Dorsolateral prefrontal cortex (tissue), 120 donors: ENCODE measurements at regions of chr14 and their contacts with region 1.

Region 1: DNA sequence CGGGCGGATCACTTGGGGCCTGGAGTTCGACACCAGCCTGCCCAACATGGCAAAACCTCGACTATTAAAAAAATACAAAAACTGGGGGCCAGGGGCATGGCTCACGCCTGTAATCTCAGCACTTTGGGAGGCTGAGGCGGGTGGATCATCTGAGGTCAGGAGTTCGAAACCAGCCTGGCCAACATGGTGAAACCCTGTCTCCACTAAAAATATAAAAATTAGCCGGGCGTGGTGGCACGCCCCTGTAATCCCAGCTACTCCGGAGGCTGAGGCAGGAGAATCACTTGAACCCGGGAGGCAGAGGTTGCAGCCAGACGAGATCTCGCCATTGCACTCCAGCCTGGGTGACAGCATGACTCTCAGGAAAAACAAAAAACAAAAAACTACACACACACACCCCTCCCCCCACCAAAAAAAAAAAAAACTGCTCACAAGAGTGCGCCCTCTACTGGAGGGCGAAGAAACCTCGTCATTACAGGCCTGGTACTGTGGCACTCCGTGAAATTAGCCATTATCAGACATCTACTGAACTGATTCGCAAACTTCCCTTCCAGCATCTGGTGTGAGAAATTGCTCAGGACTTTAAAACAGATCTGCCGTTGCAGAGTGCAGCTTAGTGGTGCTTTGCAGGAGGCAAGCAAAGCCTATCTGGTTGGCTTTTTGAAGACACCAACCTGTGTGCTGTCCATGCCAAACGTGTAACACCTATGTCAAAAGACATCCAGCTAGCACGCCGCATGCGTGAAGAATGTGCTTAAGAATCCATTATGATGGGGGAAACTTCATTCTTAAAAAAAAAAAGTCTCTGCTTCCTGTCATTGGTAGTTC is 7.7 kb downstream of the PPP1R3E start:
- DNase-seq: peak in 3 of 10 donors; percentile 19 to 45 (median 35)
- H3K4me3 ChIP-seq: peak overlapping the region in 34 of 59 donors; percentile 3 to 45 (median 24)
- H3K27ac ChIP-seq: peak overlapping the region; percentile 7 to 100 (median 91)
- H3K27me3 ChIP-seq: no peaks in the 10 kb centered on the region
- CTCF ChIP-seq: peak; percentile 71 to 95 (median 86)

Region 2: DNA sequence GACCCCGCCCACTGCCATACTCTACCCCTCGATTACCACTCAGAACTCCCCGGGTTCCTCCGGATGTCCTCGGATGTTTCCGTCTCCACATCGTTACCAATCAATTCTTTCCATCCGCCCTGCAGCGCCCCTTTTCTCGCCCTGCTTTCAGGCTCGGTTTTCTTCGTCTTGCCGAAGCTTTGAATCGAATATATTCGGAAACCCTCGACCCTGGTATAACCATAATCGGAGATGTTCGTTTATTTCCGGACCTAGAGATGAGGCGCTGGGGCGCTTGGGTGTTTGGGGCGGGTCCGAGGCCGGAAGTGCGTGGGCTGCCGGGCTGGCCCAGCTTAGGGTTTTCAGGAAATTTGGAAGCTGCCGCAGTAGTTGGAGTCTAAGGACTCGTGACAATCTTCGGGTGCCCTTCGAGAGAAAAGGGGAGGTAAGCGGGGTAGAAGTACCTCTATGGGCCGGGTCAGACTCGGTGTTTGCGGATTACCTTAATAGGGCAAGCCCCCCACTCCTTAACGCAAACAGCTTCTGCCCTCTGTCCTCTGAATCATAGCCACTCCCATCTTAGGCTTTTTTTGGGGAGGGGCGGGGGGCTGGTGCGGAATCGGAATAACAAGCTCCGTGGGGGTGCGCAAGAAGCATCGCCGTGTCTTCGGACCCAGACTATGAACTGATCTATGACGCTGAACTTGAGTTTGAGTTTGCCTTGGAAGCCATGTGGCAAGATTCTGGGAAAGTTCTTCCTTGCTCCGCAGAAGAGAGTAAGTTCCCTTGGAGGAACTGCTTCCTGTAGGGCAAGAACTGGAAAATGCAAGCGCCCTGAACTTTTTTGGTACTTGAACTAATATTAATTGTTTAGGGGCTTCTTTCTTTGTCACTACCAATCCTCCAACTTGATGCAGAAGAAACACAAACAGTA is 199.5 kb before region 1 on chr14 and contains the start of gene C14orf119:
- intact Hi-C with region 1: no loop called
- DNase-seq: peak in 8 of 10 donors; percentile 99 to 100 (median 99)
- H3K4me3 ChIP-seq: peak within 1 kb of the TSS; percentile 66 to 99 (median 87)
- H3K27ac ChIP-seq: peak within 1 kb of the TSS; percentile 95 to 100 (median 99)
- H3K27me3 ChIP-seq: no peaks in the 10 kb centered on the region
- CTCF ChIP-seq: peak in 11 of 56 donors; percentile 4 to 55 (median 14)
- total RNA-seq, gene C14orf119: 7.9 to 32.3 (median 22.8) TPM

Region 3: DNA sequence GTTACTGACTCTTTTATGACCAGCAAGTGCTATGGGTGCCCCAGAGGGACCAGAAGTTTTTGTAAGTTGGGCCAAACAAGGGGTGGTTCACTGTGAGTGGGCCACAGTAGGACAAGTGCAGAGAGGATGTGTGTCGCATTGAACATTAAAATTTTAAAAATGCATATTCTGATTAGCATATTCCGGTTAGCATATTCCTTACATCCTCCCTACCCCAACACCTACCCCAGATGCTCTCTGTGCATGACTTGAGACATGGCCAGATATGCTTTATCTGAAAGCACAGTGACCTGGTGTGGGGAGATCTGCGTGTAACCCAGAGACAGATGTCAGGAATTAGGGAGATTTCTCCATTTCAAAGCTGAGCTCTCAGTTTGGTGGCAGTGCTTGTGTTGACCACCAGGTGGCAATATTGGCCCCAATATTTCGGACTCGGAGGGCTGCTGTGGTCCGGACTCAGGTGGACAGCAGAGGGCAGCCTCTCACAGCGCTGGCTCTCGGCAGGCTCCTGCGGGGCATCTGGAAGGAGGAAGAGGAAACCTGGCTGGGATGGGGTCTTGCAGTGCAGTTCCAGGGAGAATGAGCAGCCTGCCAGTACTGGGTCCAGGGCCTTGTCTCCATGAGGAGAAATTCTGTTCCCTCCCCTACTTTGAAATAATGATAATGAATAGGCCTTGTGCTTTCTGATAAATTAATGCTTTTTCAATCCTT is 174.3 kb before region 1 on chr14:
- intact Hi-C with region 1: loop called (anchors 10 kb)
- DNase-seq: peak; percentile 85 to 93 (median 90)
- H3K4me3 ChIP-seq: peak overlapping the region in 3 of 59 donors; percentile 2 to 34 (median 26)
- H3K27ac ChIP-seq: peak overlapping the region in 16 of 59 donors; percentile 2 to 60 (median 28)
- H3K27me3 ChIP-seq: peaks cover 0 to 8% (median 0%) of the 10 kb centered on the region in 45 donors
- CTCF ChIP-seq: peak; percentile 99 to 100 (median 100)

Region 4: DNA sequence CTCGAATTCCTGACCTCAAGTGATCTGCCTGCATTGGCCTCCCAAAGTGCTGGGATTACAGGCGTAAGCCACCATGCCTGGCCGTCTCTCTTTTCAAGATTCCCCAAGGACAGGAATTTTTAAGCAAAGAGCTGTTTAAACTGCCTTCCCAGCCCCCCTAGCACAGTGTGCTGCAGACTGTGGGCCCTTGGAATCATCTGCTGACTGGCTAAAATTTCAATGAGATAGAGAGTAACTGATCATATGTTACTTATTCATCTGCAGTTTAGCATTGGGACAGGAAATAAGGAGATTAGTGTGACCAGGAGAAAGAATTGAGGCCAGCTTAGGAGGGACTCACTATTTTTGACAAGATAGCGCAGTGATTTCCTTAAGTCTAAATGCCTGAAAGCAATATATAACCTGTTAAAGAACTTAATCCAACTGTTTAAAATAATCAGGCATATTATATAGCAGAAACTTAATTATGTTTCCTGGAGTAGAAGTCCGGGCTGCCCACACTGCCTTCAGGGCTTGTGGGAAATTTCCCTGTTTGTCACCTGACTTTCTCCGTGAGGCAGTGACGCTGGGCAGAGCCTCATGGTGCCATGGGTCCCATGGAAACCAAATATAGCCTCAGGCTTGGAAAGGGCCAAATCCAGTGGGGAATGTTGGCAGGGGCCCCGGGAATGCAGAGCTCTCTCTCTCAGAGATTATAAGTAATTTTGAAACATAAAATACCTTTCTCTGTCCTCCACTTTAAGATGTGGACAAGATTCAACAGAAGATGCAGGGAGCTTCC is 153.1 kb before region 1 on chr14:
- intact Hi-C with region 1: no loop called
- DNase-seq: peak in 2 of 10 donors; percentile 17 to 40
- H3K4me3 ChIP-seq: no peak overlapping the region
- H3K27ac ChIP-seq: peak overlapping the region in 10 of 59 donors; percentile 2 to 61 (median 28)
- H3K27me3 ChIP-seq: no peaks in the 10 kb centered on the region
- CTCF ChIP-seq: no peak

Region 5: GRCh38 chr14:23195550-23196101 is 99.3 kb before region 1 on chr14:
- intact Hi-C with region 1: no loop called
- DNase-seq: no peak
- H3K4me3 ChIP-seq: no peak overlapping the region
- H3K27ac ChIP-seq: no peak overlapping the region
- H3K27me3 ChIP-seq: no peaks in the 10 kb centered on the region
- CTCF ChIP-seq: no peak

Region 6: DNA sequence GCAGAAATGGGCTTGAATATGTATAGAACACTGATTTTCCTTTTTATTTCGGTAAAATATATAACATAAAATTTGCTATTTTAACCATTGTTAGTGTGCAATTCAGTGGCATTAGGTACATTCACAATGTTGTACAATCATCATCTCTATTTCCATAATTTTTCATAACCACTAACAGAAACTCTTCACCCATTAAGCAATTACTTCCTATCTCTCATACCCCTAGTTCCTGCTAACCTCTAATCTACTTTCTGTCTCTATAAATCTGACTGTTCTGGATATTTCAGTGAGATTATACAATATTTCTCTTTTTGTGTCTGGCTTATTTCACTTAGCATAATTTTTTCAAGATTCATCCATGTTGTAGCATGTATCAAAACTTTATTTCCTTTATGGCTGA is 66.1 kb before region 1 on chr14:
- intact Hi-C with region 1: no loop called
- DNase-seq: no peak
- H3K4me3 ChIP-seq: no peak overlapping the region
- H3K27ac ChIP-seq: no peak overlapping the region
- H3K27me3 ChIP-seq: no peaks in the 10 kb centered on the region
- CTCF ChIP-seq: no peak

Region 7: DNA sequence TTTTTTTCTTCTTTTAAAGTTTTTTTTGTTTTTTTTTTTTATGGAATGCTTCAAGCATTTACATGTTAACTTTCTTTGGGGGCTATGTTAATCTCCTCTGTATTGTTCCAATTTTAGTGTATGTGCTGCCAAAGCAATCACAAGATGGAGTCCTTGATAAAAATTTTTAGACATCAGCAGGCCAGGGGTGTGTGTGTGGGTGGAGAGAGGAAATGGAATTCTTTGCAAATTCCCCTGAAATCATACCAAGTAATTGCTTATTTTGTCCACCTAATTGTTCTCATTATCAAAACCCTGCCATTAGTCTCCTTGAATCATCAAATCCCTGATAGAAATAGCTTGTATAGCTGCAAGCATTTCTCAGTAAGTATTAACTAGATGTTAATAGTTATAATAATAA is 35.5 kb before region 1 on chr14:
- intact Hi-C with region 1: loop called in 1 of 2 experiments (anchors 2 kb)
- DNase-seq: no peak
- H3K4me3 ChIP-seq: no peak overlapping the region
- H3K27ac ChIP-seq: no peak overlapping the region
- H3K27me3 ChIP-seq: peaks cover 0 to 5% (median 0%) of the 10 kb centered on the region in 45 donors
- CTCF ChIP-seq: no peak